MCF 10A (cell line): ENCODE measurements at regions of chr1 and their contacts with region 1.

Region 1: DNA sequence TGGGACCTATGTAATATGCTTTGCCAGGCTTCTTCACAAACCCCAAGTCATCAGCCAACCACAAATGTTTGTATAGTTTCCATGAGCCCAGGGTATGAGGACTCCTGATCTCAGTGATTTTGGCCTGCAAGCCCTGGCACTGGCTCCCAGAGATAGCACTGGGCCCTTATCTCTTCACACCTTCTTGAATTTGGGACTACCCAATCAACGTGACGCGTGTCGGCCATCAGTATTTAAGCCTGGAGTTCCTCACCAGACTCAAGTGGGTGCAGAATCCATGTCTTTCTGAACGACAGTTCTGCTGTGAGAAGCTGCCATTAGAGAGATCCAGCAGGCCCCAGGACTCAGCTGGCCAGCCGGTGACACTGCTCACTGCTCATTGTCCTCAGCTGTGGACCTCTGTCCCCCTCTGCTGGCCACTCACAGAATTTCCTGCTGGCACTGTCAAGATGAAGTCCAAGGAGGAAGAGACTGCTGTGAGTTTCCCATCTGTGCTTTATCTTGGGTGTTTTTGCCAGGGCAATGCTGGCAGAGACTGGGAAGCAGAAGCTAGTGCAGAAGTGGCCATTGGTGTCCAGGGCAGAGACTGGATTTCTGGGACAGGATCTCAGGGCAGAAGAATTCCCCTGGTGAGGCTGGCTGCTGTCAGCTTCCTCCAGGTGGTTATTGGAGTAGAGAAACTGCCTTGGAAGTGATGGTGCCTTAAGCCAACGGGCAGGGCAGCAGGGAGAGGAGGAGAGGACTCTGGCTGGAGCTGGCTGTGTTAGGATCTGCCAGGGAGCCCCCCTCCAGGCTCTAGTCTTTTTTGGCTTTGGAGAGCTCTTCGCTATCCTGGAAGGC is 28.4 kb downstream of the TMCC2 start:
- DNase-seq: peak; percentile 95
- H3K4me3 Mint-ChIP-seq: no peak overlapping the region
- H3K27ac Mint-ChIP-seq: no peak overlapping the region
- H3K4me1 Mint-ChIP-seq: peaks cover 31% of the 10 kb centered on the region
- H3K27me3 Mint-ChIP-seq: no peaks in the 10 kb centered on the region
- CTCF ChIP-seq: peak; percentile 100

Region 2: GRCh38 chr1:204819495-204819894 is 436.7 kb before region 1 on chr1:
- CTCF ChIA-PET with region 1: interaction called, 10 read pairs
- POLR2A ChIA-PET with region 1: no interaction called
- intact Hi-C with region 1: no loop called
- DNase-seq: no peak
- H3K4me3 Mint-ChIP-seq: no peak overlapping the region
- H3K27ac Mint-ChIP-seq: no peak overlapping the region
- H3K4me1 Mint-ChIP-seq: no peaks in the 10 kb centered on the region
- H3K27me3 Mint-ChIP-seq: peaks cover 82% of the 10 kb centered on the region
- CTCF ChIP-seq: no peak

Region 3: GRCh38 chr1:205091043-205091740 is 165.0 kb before region 1 on chr1:
- CTCF ChIA-PET with region 1: interaction called, 23 read pairs
- POLR2A ChIA-PET with region 1: no interaction called
- intact Hi-C with region 1: no loop called
- DNase-seq: peak; percentile 75
- H3K4me3 Mint-ChIP-seq: no peak overlapping the region
- H3K27ac Mint-ChIP-seq: peak overlapping the region; percentile 40
- H3K4me1 Mint-ChIP-seq: peaks cover 15% of the 10 kb centered on the region
- H3K27me3 Mint-ChIP-seq: no peaks in the 10 kb centered on the region
- CTCF ChIP-seq: no peak

Region 4: GRCh38 chr1:205172729-205173366 is 83.3 kb before region 1 on chr1:
- CTCF ChIA-PET with region 1: interaction called, 21 read pairs
- POLR2A ChIA-PET with region 1: interaction called, 3 read pairs
- intact Hi-C with region 1: no loop called
- DNase-seq: peak; percentile 93
- H3K4me3 Mint-ChIP-seq: no peak overlapping the region
- H3K27ac Mint-ChIP-seq: peak overlapping the region; percentile 95
- H3K4me1 Mint-ChIP-seq: peaks cover 15% of the 10 kb centered on the region
- H3K27me3 Mint-ChIP-seq: no peaks in the 10 kb centered on the region
- CTCF ChIP-seq: no peak

Region 5: DNA sequence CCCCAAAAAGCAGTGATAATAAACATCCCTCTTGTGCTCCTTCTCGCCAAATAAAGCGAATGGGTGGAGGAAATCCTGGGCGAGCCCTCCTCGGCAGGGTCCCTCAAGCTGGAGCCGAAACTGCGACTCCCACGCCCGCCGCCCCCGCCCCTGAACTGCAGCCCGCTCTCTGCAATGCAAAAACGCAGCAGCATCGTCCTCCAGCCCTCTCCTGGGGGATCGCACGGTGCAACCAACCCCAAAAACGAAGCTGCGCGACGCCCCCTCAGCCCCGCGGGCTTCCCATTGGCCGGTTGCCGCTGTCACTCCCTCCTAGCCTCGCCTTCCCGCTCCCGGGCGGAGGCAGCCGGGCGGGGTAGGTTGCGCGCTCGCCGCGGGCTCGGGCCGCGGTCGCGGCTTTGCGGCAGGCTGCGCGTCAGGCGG is 28.6 kb before region 1 on chr1 and contains the start of gene TMCC2:
- CTCF ChIA-PET with region 1: interaction called, 487 read pairs
- POLR2A ChIA-PET with region 1: interaction called, 121 read pairs
- intact Hi-C with region 1: loop called (anchors 1 kb)
- DNase-seq: peak; percentile 91
- H3K4me3 Mint-ChIP-seq: peak within 1 kb of the TSS; percentile 63
- H3K27ac Mint-ChIP-seq: no peak within 1 kb of the TSS
- H3K4me1 Mint-ChIP-seq: peaks cover 20% of the 10 kb centered on the region
- H3K27me3 Mint-ChIP-seq: no peaks in the 10 kb centered on the region
- CTCF ChIP-seq: no peak
- total RNA-seq, gene TMCC2: 0.54 and 0.79 TPM in 2 replicates